ENCODE measurements at regions of chr12 and their contacts with region 1.

Region 1: GRCh38 chr12:5739862-5740375 is 205.1 kb downstream of the ANO2 start:
- DNase-seq: no peak
- H3K4me3 ChIP-seq: no peak overlapping the region
- H3K27ac ChIP-seq: no peak overlapping the region
- H3K4me1 ChIP-seq: no peaks in the 10 kb centered on the region
- H3K27me3 ChIP-seq: peaks cover 2% of the 10 kb centered on the region
- CTCF ChIP-seq: no peak

Region 2: GRCh38 chr12:5473076-5473782 is 266.7 kb before region 1 on chr12:
- CTCF ChIA-PET with region 1: no interaction called
- dilution Hi-C with region 1: no loop called
- in situ Hi-C with region 1: no loop called
- intact Hi-C with region 1: no loop called
- DNase-seq: no peak
- H3K4me3 ChIP-seq: no peak overlapping the region
- H3K27ac ChIP-seq: no peak overlapping the region
- H3K4me1 ChIP-seq: no peaks in the 10 kb centered on the region
- H3K27me3 ChIP-seq: peaks cover 1% of the 10 kb centered on the region
- CTCF ChIP-seq: no peak

Region 3: GRCh38 chr12:5522432-5523335 is 217.2 kb before region 1 on chr12:
- CTCF ChIA-PET with region 1: no interaction called
- dilution Hi-C with region 1: no loop called
- in situ Hi-C with region 1: no loop called
- intact Hi-C with region 1: no loop called
- DNase-seq: no peak
- H3K4me3 ChIP-seq: no peak overlapping the region
- H3K27ac ChIP-seq: no peak overlapping the region
- H3K4me1 ChIP-seq: no peaks in the 10 kb centered on the region
- H3K27me3 ChIP-seq: no peaks in the 10 kb centered on the region
- CTCF ChIP-seq: no peak

Region 4: GRCh38 chr12:5827591-5827990 is 87.7 kb after region 1 on chr12:
- CTCF ChIA-PET with region 1: no interaction called
- dilution Hi-C with region 1: loop called (anchors 5 kb)
- in situ Hi-C with region 1: no loop called
- intact Hi-C with region 1: no loop called
- DNase-seq: no peak
- H3K4me3 ChIP-seq: no peak overlapping the region
- H3K27ac ChIP-seq: no peak overlapping the region
- H3K4me1 ChIP-seq: no peaks in the 10 kb centered on the region
- H3K27me3 ChIP-seq: no peaks in the 10 kb centered on the region
- CTCF ChIP-seq: no peak

Measured in mammary epithelial cell (primary cell).